AG04449 (cell line): ENCODE measurements at regions of chr9 and their contacts with region 1.

Region 1: DNA sequence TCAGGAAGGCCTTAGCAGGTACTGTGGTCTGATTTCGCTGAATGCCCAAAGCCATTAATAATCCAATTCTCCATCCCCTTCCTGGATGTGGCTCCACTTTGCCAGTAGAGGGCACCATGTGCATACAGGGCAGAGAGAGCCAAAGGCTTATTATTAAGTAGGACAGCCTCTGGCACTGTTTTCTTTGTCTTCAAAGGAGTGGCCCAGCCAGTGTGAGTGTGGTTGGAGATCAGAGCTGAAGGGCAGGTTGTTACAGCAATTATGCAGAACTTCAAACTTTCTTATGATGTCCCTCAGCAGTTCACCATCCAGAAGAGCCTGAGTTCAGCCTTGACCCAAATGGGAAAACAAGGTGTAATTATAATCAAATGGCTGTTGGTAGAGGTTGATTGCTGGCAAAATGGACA is 38.6 kb upstream of the CEMIP2 start:
- DNase-seq: peak; percentile 29
- H3K4me3 ChIP-seq: no peak overlapping the region
- CTCF ChIP-seq: peak; percentile 91

Region 2: GRCh38 chr9:71819115-71819739 is 12.3 kb after region 1 on chr9:
- CTCF ChIA-PET with region 1: interaction called, 151 read pairs
- POLR2A ChIA-PET with region 1: no interaction called
- DNase-seq: no peak
- H3K4me3 ChIP-seq: no peak overlapping the region
- CTCF ChIP-seq: peak; percentile 37

Region 3: GRCh38 chr9:71975833-71976232 is 168.9 kb after region 1 on chr9:
- CTCF ChIA-PET with region 1: interaction called, 69 read pairs
- POLR2A ChIA-PET with region 1: no interaction called
- DNase-seq: no peak
- H3K4me3 ChIP-seq: no peak overlapping the region
- CTCF ChIP-seq: peak; percentile 12

Region 4: GRCh38 chr9:72022841-72023240 is 215.9 kb after region 1 on chr9:
- CTCF ChIA-PET with region 1: interaction called, 101 read pairs
- POLR2A ChIA-PET with region 1: no interaction called
- DNase-seq: peak; percentile 88
- H3K4me3 ChIP-seq: no peak overlapping the region
- CTCF ChIP-seq: no peak

Region 5: DNA sequence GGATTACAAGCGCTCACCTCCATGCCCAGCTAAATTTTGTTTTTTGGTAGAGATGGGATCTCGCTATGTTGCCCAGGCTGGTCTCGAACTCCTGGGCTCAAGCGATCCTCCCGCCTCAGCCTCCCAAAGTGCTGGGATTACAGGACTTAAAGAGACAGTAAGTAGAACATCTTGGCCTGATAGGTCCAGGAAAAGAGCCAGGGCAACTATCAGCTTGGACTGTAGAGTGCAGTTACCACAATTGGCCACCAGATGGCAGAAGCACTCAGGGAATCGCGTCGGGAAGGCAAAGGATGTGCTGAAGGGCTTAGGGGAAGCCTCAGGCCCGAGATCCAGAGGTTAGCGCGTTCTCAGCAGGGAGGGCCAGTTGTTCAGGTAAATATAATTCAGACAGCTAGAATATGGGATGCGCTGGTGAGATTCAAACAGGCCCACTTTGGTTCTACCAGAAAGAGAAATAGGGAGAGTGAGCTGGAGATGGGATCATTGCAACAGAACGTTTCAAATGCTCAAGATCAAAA is 232.0 kb after region 1 on chr9:
- CTCF ChIA-PET with region 1: interaction called, 26 read pairs
- POLR2A ChIA-PET with region 1: no interaction called
- DNase-seq: no peak
- H3K4me3 ChIP-seq: no peak overlapping the region
- CTCF ChIP-seq: peak; percentile 93